ENCODE measurements at regions of chr13 and their contacts with region 1.

Region 1: GRCh38 chr13:25901460-25902376 is 150.1 kb downstream of the SHISA2 start:
- DNase-seq: peak; percentile 44
- H3K4me3 Mint-ChIP-seq: peak overlapping the region; percentile 6
- H3K27ac Mint-ChIP-seq: no peak overlapping the region
- H3K4me1 Mint-ChIP-seq: peaks cover 26% of the 10 kb centered on the region
- H3K27me3 Mint-ChIP-seq: peaks cover 9% of the 10 kb centered on the region

Region 2: DNA sequence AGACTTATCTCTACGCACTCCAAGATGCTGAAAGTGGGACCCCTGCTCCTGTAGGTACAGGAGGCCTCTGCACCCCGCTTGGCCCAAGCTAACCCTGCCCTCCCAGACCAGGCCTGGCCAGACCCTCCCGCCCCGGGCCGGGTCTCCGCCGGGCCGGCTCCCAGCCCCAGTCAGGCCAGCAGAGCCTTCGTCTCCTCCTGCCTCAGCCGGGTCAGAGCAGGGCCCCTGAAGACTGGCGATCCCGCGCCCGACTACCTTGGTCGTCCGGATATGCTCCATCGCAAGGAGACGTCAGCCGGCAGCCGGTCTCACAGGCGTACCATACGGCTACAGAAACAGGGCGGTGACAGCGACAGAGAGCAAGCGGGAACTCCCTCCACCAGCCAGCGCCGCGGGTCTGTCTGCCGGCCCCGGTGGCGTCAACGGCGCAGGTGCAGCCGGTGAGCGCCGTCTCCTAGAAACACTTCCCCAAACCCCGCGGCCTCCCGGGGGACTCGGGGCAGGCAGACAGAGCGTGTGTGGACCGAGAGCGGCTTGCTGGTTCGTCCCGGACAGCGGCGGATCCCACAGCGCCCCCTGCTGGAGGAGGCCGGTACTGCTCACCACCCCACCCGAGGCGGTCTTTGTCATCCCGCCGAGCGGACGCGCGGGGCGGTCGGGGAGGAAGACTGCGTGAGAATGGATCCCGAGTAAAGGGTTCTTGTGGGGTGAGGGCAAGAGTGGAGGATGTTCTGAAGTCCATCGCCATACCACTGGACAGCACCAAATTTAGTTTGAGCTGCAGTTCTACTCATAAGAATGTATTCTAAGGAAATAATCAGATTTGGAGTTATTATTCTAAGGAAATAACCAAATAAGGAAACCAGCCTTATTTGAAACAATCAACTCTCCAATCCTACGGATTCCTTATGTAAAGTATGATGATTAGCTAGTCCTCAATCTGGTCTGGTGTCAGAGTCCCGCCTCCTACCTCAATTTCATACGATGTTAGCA is 614.5 kb before region 1 on chr13 and contains the start of gene MTMR6:
- CTCF ChIA-PET with region 1: no interaction called
- POLR2A ChIA-PET with region 1: no interaction called
- intact Hi-C with region 1: loop called (anchors 10 kb)
- DNase-seq: peak; percentile 96
- H3K4me3 Mint-ChIP-seq: peak within 1 kb of the TSS; percentile 93
- H3K27ac Mint-ChIP-seq: peak within 1 kb of the TSS; percentile 86
- H3K4me1 Mint-ChIP-seq: peaks cover 40% of the 10 kb centered on the region
- H3K27me3 Mint-ChIP-seq: no peaks in the 10 kb centered on the region
- total RNA-seq, gene MTMR6: 12.2 to 12.5 TPM

Region 3: DNA sequence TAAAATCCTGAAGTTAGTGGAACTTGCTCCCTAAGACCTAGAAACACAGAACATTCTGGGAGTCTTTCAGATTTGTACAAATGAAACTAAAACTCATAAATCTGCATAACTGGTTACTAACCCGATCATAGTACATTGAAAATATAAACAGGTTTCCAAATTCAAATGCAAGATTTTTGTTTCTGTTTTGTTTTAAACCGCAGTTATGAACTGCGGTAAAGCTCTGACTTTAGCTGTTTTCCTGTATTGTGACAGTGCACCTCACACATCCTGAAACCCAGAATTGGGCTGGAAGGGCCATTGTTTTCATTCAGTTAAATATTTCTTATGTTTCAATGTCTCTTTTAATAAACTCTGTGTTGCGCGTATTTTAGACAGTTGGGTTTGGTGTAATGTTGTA is 54.6 kb before region 1 on chr13:
- CTCF ChIA-PET with region 1: no interaction called
- POLR2A ChIA-PET with region 1: no interaction called
- intact Hi-C with region 1: loop called (anchors 1 kb)
- DNase-seq: peak; percentile 18
- H3K4me3 Mint-ChIP-seq: no peak overlapping the region
- H3K27ac Mint-ChIP-seq: no peak overlapping the region
- H3K4me1 Mint-ChIP-seq: peaks cover 29% of the 10 kb centered on the region
- H3K27me3 Mint-ChIP-seq: no peaks in the 10 kb centered on the region

Region 4: GRCh38 chr13:25886438-25887214 is 15.1 kb before region 1 on chr13:
- CTCF ChIA-PET with region 1: no interaction called
- POLR2A ChIA-PET with region 1: interaction called, 5 read pairs
- intact Hi-C with region 1: loop called (anchors 1 kb)
- DNase-seq: peak; percentile 62
- H3K4me3 Mint-ChIP-seq: no peak overlapping the region
- H3K27ac Mint-ChIP-seq: no peak overlapping the region
- H3K4me1 Mint-ChIP-seq: peaks cover 51% of the 10 kb centered on the region
- H3K27me3 Mint-ChIP-seq: no peaks in the 10 kb centered on the region

Region 5: DNA sequence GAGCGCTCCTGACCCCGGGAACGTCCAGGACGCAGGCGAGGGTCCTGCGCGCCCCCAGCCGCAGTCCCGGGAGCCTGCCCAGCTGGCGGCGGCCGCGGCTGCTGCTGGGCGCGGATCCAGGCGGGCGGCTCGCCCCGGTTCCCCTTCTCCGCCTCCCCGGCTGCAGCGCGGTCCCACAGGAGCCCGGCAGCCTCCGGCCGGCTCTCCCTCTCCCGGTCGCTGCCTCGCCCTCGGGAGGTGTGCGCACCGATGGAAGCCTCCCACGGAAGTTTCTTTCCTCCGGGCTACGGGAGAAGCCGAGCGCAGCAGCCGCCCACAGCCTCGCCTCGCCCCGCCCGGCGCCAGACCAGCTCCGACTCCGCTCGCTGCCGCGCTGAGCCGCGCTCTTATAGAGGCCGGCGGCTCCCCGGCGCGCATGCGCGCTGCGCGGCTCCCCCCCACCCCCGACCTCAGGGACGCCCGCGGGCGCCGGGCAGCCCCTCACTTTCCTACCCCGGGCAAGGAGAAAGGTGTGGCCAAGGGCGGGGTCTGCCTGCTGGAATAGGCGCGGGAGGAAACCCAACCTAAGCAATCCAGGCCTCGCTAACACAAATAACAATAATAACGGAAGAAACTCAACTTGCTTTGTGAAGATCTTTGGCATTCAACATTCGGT is 150.1 kb after region 1 on chr13 and contains the start of gene SHISA2:
- CTCF ChIA-PET with region 1: no interaction called
- POLR2A ChIA-PET with region 1: no interaction called
- intact Hi-C with region 1: loop called (anchors 5 kb)
- DNase-seq: peak; percentile 44
- H3K4me3 Mint-ChIP-seq: peak within 1 kb of the TSS; percentile 58
- H3K27ac Mint-ChIP-seq: no peak within 1 kb of the TSS
- H3K4me1 Mint-ChIP-seq: peaks cover 19% of the 10 kb centered on the region
- H3K27me3 Mint-ChIP-seq: peaks cover 27% of the 10 kb centered on the region
- total RNA-seq, gene SHISA2: 0.17 TPM in 1 of 2 experiments, not detected in the other

Region 6: DNA sequence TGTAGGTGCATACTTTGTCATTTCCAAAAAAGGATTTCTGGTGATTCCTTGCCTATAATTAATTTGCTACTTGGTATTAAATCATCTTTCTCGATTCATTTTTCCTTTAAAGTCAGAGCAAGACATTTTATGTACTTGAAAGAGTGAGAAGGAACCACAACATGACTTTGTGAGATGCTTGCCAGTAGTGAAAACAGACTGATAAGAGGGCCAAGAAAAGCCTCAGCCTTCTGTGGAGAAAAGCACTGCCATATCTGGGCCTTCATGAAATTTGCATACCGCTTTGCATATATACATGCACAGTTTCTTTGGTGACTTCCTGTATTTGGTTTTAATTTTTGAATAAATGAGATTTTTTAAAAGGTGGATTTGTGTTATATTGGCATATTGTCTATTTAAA is 480.6 kb after region 1 on chr13:
- CTCF ChIA-PET with region 1: no interaction called
- POLR2A ChIA-PET with region 1: no interaction called
- intact Hi-C with region 1: no loop called
- DNase-seq: no peak
- H3K4me3 Mint-ChIP-seq: no peak overlapping the region
- H3K27ac Mint-ChIP-seq: no peak overlapping the region
- H3K4me1 Mint-ChIP-seq: peaks cover 3% of the 10 kb centered on the region
- H3K27me3 Mint-ChIP-seq: no peaks in the 10 kb centered on the region